B cell (primary cell): ENCODE measurements at regions of chr21 and their contacts with region 1.

Region 1: DNA sequence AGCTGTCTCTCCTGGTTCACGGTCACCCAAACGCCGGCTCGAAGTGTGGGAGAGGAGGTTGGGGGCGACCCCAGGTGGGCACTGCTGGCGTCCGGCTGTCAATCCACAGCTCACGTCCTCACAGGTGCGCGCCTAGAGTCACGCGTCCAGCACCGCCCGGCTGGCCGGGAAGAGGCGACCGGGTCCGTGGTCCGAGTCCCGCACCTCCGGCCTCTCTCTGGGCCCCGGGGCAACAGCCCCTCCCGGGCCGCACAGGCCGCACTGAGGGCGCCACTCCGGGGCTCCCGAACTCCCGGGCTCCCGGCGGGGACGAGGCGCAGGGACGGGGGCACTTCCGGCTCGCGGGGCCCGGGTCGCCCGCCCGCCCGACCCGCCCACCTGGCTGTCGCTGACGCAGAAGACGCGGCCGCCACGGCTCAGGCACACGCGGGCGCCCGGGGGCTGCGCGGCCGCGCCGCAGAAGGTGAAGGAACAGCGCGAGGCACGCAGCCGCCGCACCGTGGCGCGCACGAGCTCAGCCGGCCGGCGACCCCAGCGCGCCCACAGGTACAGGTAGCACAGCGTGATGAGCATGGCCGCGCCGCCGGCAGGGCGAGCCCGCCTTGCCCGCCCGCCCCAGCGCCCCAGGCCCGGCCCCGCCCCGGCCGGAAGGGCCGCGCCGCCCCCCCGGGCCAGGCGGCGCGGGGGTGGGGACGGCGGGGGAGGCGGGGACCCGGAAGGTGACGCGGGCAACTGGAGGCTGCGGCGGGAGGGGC is at the start of gene HLCS:
- DNase-seq: peak; percentile 87
- ATAC-seq: peak; percentile 90
- H3K4me3 ChIP-seq: peak within 1 kb of the TSS in 4 of 5 experiments; percentile 43 to 73 (median 69)
- H3K4me3 Mint-ChIP-seq: peak within 1 kb of the TSS; percentile 92
- H3K27ac ChIP-seq: peak within 1 kb of the TSS; percentile 39 to 81
- H3K27ac Mint-ChIP-seq: peak within 1 kb of the TSS; percentile 89
- H3K4me1 ChIP-seq: peaks cover 13 to 16% of the 10 kb centered on the region in 2 donors
- H3K4me1 Mint-ChIP-seq: peaks cover 15% of the 10 kb centered on the region
- H3K27me3 ChIP-seq: no peaks in the 10 kb centered on the region
- H3K27me3 Mint-ChIP-seq: no peaks in the 10 kb centered on the region
- CTCF ChIP-seq: peak; percentile 22
- total RNA-seq, gene HLCS: 14.7 and 16.2 TPM in 2 replicates

Region 2: GRCh38 chr21:36847171-36847570 is 119.1 kb before region 1 on chr21:
- CTCF ChIA-PET with region 1: no interaction called
- POLR2A ChIA-PET with region 1: no interaction called
- intact Hi-C with region 1: no loop called
- DNase-seq: no peak
- ATAC-seq: no peak
- H3K4me3 ChIP-seq: no peak overlapping the region
- H3K4me3 Mint-ChIP-seq: no peak overlapping the region
- H3K27ac ChIP-seq: no peak overlapping the region
- H3K27ac Mint-ChIP-seq: no peak overlapping the region
- H3K4me1 ChIP-seq: no peaks in the 10 kb centered on the region
- H3K4me1 Mint-ChIP-seq: no peaks in the 10 kb centered on the region
- H3K27me3 ChIP-seq: no peaks in the 10 kb centered on the region
- H3K27me3 Mint-ChIP-seq: no peaks in the 10 kb centered on the region
- CTCF ChIP-seq: no peak

Region 3: DNA sequence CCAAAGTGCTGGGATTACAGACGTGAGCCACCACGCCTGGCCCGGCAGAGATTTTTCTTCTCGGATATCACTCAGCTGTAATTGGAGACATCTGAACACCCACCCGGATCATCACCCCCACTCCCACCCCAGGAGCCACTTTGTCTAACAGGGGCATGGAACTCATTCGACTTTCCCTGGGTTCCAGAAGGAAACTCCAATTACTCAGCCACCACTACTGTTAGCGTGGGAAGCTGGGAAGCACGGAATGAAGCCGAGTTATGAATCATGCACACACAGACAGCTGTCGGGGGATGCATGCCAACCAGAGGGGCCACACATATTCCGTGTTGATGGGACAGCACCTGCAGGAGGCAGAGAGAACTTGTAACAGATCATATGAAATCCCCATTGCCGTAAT is 85.0 kb before region 1 on chr21:
- CTCF ChIA-PET with region 1: no interaction called
- POLR2A ChIA-PET with region 1: no interaction called
- intact Hi-C with region 1: no loop called
- DNase-seq: no peak
- ATAC-seq: no peak
- H3K4me3 ChIP-seq: no peak overlapping the region
- H3K4me3 Mint-ChIP-seq: no peak overlapping the region
- H3K27ac ChIP-seq: no peak overlapping the region
- H3K27ac Mint-ChIP-seq: no peak overlapping the region
- H3K4me1 ChIP-seq: no peaks in the 10 kb centered on the region
- H3K4me1 Mint-ChIP-seq: no peaks in the 10 kb centered on the region
- H3K27me3 ChIP-seq: no peaks in the 10 kb centered on the region
- H3K27me3 Mint-ChIP-seq: no peaks in the 10 kb centered on the region
- CTCF ChIP-seq: no peak

Region 4: DNA sequence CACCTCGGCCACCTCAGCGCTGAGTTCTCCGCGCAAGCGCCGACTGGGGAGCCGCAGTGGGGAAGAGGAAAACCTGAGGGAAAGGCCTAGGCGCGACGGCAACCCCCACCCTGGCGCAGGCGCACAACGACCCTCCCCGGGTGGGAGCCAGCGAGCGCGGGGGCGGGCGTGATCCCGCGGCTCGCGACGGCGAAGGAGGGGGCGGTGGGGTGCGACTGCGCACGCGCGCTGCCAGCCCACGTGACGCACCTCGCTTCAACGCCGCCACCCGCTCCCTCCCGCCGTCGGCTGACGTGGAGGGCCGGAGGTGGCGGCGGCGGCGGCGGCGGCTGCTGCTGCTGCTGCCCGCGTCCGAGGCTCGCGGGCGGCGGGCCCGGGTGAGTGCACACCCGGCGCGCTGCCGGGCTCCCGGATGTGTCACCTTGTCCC is 106.8 kb after region 1 on chr21 and contains the starts of genes PIGP and TTC3:
- CTCF ChIA-PET with region 1: no interaction called
- POLR2A ChIA-PET with region 1: no interaction called
- intact Hi-C with region 1: loop called (anchors 2 kb)
- DNase-seq: peak; percentile 98
- ATAC-seq: peak; percentile 67
- H3K4me3 ChIP-seq: peak within 1 kb of the TSS; percentile 80 to 92 (median 86)
- H3K4me3 Mint-ChIP-seq: peak within 1 kb of the TSS; percentile 98
- H3K27ac ChIP-seq: peak within 1 kb of the TSS; percentile 98
- H3K27ac Mint-ChIP-seq: peak within 1 kb of the TSS; percentile 99
- H3K4me1 ChIP-seq: peaks cover 22 to 23% of the 10 kb centered on the region in 2 donors
- H3K4me1 Mint-ChIP-seq: peaks cover 46% of the 10 kb centered on the region
- H3K27me3 ChIP-seq: no peaks in the 10 kb centered on the region
- H3K27me3 Mint-ChIP-seq: no peaks in the 10 kb centered on the region
- CTCF ChIP-seq: no peak
- total RNA-seq, gene PIGP: 21.7 and 22.7 TPM in 2 replicates
- total RNA-seq, gene TTC3: 163 and 191 TPM in 2 replicates